ENCODE measurements at regions of chr17 and their contacts with region 1.

Region 1: DNA sequence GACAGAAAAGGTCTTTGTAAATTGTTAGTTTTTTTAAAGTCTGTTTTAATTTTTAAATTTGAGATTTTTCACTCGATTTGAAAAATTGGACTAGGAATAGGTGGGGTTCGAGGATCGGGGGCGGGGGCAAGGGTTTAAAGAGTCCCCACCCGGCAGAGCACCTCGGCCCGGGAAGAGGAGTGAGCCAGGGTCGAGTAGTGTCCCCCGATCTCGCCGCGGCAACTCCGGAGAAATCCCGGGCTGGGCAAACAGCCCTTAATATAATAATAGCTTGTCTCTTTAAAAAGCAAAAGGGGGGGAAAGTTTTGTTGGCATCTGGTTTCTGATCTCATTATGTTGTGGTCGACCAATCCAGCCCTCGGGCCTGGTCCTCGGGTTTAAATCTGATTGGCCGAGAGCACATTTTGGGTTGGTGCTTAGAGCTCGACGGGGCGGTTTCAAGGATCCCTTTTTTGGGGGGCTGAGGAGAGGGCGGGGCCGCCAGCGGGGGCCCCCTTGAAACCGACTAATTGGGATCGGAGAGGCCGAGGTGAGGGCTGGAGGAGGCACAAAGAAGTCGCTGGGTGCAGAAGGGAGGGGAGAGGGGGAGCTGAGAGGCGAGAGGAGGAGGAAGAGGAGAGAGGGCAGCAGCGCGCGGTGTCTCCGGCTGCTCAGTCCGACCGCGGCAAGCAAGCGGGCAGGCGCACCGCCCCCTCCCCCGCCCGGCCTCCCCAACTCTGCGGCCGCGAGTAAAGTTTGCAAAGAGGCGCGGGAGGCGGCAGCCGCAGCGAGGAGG is at the start of gene FZD2:
- DNase-seq: peak; percentile 92
- H3K4me3 ChIP-seq: peak within 1 kb of the TSS; percentile 44 to 94 (median 87)
- H3K27ac ChIP-seq: peak within 1 kb of the TSS; percentile 30
- H3K4me1 ChIP-seq: peaks cover 7% of the 10 kb centered on the region
- H3K27me3 ChIP-seq: peaks cover 21 to 36% of the 10 kb centered on the region in 2 experiments
- CTCF ChIP-seq: no peak
- POLR2A ChIP-seq: no peak
- total RNA-seq, gene FZD2: 4.4 and 5.8 TPM in 2 replicates

Region 2: GRCh38 chr17:44546671-44547606 is 10.1 kb before region 1 on chr17:
- CTCF ChIA-PET with region 1: interaction called, 12 read pairs
- POLR2A ChIA-PET with region 1: no interaction called
- dilution Hi-C with region 1: no loop called
- intact Hi-C with region 1: loop called (anchors 1 kb)
- DNase-seq: peak; percentile 61
- H3K4me3 ChIP-seq: no peak overlapping the region
- H3K27ac ChIP-seq: peak overlapping the region; percentile 71
- H3K4me1 ChIP-seq: peaks cover 13% of the 10 kb centered on the region
- H3K27me3 ChIP-seq: peaks cover 0 to 5% of the 10 kb centered on the region in 2 experiments
- CTCF ChIP-seq: no peak
- POLR2A ChIP-seq: no peak

Region 3: GRCh38 chr17:44722254-44722653 is 165.2 kb after region 1 on chr17:
- CTCF ChIA-PET with region 1: no interaction called
- POLR2A ChIA-PET with region 1: no interaction called
- dilution Hi-C with region 1: no loop called
- intact Hi-C with region 1: no loop called
- DNase-seq: no peak
- H3K4me3 ChIP-seq: no peak overlapping the region
- H3K27ac ChIP-seq: no peak overlapping the region
- H3K4me1 ChIP-seq: no peaks in the 10 kb centered on the region
- H3K27me3 ChIP-seq: no peaks in the 10 kb centered on the region
- CTCF ChIP-seq: no peak
- POLR2A ChIP-seq: no peak